Panc1 (cell line): ENCODE measurements at regions of chr2 and their contacts with region 1.

Region 1: GRCh38 chr2:5291831-5292230 is 400.4 kb upstream of the SOX11 start:
- DNase-seq: no peak
- ATAC-seq: no peak
- H3K4me3 ChIP-seq: no peak overlapping the region
- H3K27ac ChIP-seq: no peak overlapping the region
- H3K4me1 ChIP-seq: no peaks in the 10 kb centered on the region
- H3K27me3 ChIP-seq: no peaks in the 10 kb centered on the region
- CTCF ChIP-seq: no peak

Region 2: DNA sequence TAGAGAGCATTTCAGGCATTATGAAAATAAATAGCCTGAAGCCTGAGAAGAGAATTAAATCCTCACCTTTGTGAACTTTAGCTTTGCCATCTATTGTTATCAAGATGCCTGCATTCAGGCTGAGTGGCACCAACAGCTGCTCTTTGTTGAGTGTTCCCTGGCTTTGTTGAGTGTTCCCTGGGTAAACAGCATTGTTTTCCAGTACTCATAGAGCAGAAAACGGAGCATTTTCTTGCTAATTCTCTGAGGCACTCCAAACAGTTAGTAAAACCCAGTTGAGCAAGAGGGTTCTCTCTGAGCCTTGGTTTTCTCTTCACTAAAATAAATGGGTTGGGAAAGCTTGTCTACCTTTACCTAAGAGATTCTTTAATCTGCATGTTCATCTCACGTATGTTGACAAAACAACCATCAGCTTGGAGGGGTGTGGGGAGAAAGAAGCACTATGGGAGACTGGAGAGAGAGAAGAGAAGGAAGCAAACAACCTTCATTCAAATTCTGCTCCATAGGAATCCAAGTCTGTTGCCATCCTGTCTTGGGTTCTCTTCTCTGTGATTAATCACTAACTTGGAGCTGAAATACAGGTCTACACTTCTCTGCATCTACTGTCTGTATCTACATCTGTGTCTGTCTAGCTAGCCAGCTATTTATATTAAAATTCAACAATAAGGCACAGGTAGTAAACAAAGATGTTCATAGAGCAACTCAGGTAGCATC is 166.7 kb before region 1 on chr2:
- CTCF ChIA-PET with region 1: no interaction called
- POLR2A ChIA-PET with region 1: no interaction called
- in situ Hi-C with region 1: no loop called
- intact Hi-C with region 1: no loop called
- DNase-seq: no peak
- ATAC-seq: no peak
- H3K4me3 ChIP-seq: no peak overlapping the region
- H3K27ac ChIP-seq: no peak overlapping the region
- H3K4me1 ChIP-seq: no peaks in the 10 kb centered on the region
- H3K27me3 ChIP-seq: no peaks in the 10 kb centered on the region
- CTCF ChIP-seq: no peak

Region 3: GRCh38 chr2:5365871-5366461 is 74.1 kb after region 1 on chr2:
- CTCF ChIA-PET with region 1: no interaction called
- POLR2A ChIA-PET with region 1: no interaction called
- in situ Hi-C with region 1: no loop called
- intact Hi-C with region 1: no loop called
- DNase-seq: peak; percentile 12
- ATAC-seq: peak; percentile 76; the same call in 1 of the 2 replicates
- H3K4me3 ChIP-seq: no peak overlapping the region
- H3K27ac ChIP-seq: no peak overlapping the region
- H3K4me1 ChIP-seq: no peaks in the 10 kb centered on the region
- H3K27me3 ChIP-seq: no peaks in the 10 kb centered on the region
- CTCF ChIP-seq: peak; percentile 84

Region 4: DNA sequence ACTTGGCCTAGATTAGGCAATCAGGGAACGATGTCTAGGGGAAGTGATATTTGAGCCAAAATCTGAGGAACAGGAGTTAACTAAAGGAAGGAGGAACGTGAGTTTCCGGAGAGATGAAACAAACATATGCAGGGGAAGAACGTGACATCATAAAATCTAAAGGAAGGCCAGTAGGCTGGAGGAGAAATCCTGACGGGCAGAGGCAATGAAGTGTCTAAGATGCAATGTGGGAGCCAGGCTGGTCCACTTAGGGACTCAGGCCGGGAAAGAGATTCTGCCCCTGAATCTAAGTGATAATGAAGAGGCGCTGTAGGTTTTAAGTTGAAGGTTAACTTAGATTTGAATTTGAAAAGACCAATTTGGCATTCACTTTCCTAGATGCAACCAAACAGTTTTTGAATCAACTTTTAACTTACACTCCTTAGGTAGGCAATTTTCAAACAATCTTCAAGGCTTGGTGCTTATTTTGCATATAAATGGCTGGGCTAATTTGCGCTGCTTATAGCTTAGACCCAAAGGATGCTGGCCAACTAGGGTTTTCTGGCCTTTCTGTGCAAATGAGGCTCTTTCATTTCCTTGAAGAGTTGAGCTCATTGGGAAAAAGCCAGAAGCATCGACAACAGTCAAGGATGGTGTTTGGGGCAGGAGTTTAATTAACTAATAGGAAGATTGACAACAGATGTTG is 622.0 kb after region 1 on chr2:
- CTCF ChIA-PET with region 1: no interaction called
- POLR2A ChIA-PET with region 1: interaction called, 16 read pairs
- in situ Hi-C with region 1: no loop called
- intact Hi-C with region 1: no loop called
- DNase-seq: no peak
- ATAC-seq: no peak
- H3K4me3 ChIP-seq: no peak overlapping the region
- H3K27ac ChIP-seq: no peak overlapping the region
- H3K4me1 ChIP-seq: no peaks in the 10 kb centered on the region
- H3K27me3 ChIP-seq: no peaks in the 10 kb centered on the region
- CTCF ChIP-seq: no peak